Activated naive CD4-positive, alpha-beta T cell treated with anti-CD3 and anti-CD28 coated beads for 36 hours (primary cell): ENCODE measurements at regions of chr3 and their contacts with region 1.

Region 1: DNA sequence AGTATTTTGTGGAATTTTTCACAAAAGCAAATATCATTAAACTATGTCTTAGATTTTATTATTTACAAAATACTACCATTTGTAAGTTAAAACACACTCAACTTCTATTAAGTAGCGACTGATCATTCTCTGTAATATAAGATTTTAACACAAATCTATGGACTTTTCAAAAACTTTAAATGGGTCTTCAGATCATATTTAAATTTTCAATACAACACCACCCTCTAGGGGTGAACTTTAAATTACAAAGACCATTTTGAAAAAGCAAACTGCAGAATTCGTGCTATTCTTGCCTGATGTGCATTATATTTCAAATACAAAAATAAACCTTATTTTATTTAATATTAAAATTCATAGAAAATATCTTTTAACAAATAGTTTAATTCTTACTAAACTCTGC is 8.2 kb upstream of the VGLL4 start:
- DNase-seq: no peak
- H3K4me3 Mint-ChIP-seq: no peak overlapping the region
- H3K27ac Mint-ChIP-seq: no peak overlapping the region
- H3K4me1 Mint-ChIP-seq: peaks cover 6% of the 10 kb centered on the region
- H3K27me3 Mint-ChIP-seq: no peaks in the 10 kb centered on the region

Region 2: GRCh38 chr3:10945683-10946287 is 706.1 kb before region 1 on chr3:
- CTCF ChIA-PET with region 1: no interaction called
- intact Hi-C with region 1: loop called (anchors 10 kb)
- DNase-seq: peak; percentile 70
- H3K4me3 Mint-ChIP-seq: no peak overlapping the region
- H3K27ac Mint-ChIP-seq: no peak overlapping the region
- H3K4me1 Mint-ChIP-seq: no peaks in the 10 kb centered on the region
- H3K27me3 Mint-ChIP-seq: peaks cover 15% of the 10 kb centered on the region

Region 3: DNA sequence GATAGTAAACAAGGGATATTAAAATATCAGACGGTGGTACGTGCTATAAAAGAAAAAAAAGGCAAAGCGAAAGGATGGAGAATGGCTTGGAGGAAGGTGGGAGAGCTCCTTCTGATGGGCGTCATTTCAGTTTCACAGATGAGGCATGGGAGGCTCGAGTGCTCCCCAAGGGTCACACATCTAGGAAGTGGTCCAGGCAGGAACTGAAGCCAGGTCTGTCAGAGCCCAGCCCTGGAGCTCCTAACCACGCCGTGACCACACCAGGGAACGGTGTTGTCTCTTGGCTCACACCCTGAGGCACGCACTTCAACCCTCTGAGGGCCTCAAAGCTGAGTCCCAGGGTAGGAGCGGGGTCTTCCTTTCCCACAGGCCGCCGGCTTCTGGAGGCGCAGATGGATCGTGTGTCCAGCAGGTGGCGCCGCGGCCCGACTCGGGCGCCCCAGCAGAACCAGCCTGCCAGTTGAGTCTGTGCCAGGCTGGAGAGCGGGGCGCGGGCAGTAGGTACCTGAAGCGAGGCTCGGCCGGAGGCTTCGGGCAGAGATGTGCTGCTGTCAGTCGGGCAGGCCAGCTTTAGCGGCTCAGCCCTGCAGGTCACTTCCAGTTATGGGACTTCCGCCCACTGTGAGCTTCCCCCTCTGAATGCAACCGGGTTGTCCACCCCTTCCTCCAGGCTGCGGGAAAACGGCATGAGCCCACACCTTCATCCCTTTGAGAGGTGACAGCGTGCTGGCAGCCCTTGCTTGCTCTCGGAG is 591.2 kb before region 1 on chr3:
- CTCF ChIA-PET with region 1: interaction called, 4 read pairs
- intact Hi-C with region 1: loop called (anchors 2 kb)
- DNase-seq: peak; percentile 51
- H3K4me3 Mint-ChIP-seq: no peak overlapping the region
- H3K27ac Mint-ChIP-seq: no peak overlapping the region
- H3K4me1 Mint-ChIP-seq: no peaks in the 10 kb centered on the region
- H3K27me3 Mint-ChIP-seq: peaks cover 13% of the 10 kb centered on the region

Region 4: GRCh38 chr3:11071096-11071755 is 580.7 kb before region 1 on chr3:
- CTCF ChIA-PET with region 1: no interaction called
- intact Hi-C with region 1: no loop called
- DNase-seq: no peak
- H3K4me3 Mint-ChIP-seq: no peak overlapping the region
- H3K27ac Mint-ChIP-seq: no peak overlapping the region
- H3K4me1 Mint-ChIP-seq: no peaks in the 10 kb centered on the region
- H3K27me3 Mint-ChIP-seq: peaks cover 25% of the 10 kb centered on the region

Region 5: GRCh38 chr3:11155341-11156025 is 496.4 kb before region 1 on chr3:
- CTCF ChIA-PET with region 1: no interaction called
- intact Hi-C with region 1: loop called (anchors 10 kb)
- DNase-seq: peak; percentile 36
- H3K4me3 Mint-ChIP-seq: no peak overlapping the region
- H3K27ac Mint-ChIP-seq: no peak overlapping the region
- H3K4me1 Mint-ChIP-seq: peaks cover 8% of the 10 kb centered on the region
- H3K27me3 Mint-ChIP-seq: peaks cover 50% of the 10 kb centered on the region

Region 6: DNA sequence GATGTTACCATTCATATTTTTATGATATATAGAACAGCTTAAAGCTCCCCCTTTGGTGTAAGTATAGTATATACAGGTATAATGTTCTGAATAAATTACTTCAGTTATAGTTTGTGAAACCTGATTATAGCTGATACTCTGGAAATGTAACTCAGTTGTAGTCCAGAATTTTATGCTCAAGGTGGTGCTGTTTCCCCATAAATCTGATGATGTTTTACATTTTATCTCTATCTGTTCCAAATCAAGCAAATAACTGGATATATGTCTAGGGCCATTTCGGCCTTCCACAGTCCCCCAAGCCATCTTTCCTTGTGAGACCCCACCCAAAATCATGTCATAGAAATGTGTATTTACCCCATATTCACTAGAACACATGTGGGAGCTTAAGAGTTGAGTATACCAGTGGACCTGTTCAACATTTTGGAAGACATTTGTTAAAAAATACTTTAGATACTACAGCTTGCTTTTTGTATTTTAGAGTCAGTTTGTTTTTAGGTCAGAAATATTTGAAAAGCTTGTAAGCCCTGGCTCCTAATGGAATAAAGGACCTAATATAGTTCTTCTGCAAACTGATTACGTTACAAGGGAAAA is 272.6 kb before region 1 on chr3:
- CTCF ChIA-PET with region 1: interaction called, 21 read pairs
- intact Hi-C with region 1: loop called (anchors 1 kb)
- DNase-seq: no peak
- H3K4me3 Mint-ChIP-seq: no peak overlapping the region
- H3K27ac Mint-ChIP-seq: no peak overlapping the region
- H3K4me1 Mint-ChIP-seq: no peaks in the 10 kb centered on the region
- H3K27me3 Mint-ChIP-seq: no peaks in the 10 kb centered on the region

Region 7: GRCh38 chr3:11530153-11530721 is 121.7 kb before region 1 on chr3:
- CTCF ChIA-PET with region 1: no interaction called
- intact Hi-C with region 1: no loop called
- DNase-seq: no peak
- H3K4me3 Mint-ChIP-seq: no peak overlapping the region
- H3K27ac Mint-ChIP-seq: no peak overlapping the region
- H3K4me1 Mint-ChIP-seq: no peaks in the 10 kb centered on the region
- H3K27me3 Mint-ChIP-seq: no peaks in the 10 kb centered on the region

Region 8: DNA sequence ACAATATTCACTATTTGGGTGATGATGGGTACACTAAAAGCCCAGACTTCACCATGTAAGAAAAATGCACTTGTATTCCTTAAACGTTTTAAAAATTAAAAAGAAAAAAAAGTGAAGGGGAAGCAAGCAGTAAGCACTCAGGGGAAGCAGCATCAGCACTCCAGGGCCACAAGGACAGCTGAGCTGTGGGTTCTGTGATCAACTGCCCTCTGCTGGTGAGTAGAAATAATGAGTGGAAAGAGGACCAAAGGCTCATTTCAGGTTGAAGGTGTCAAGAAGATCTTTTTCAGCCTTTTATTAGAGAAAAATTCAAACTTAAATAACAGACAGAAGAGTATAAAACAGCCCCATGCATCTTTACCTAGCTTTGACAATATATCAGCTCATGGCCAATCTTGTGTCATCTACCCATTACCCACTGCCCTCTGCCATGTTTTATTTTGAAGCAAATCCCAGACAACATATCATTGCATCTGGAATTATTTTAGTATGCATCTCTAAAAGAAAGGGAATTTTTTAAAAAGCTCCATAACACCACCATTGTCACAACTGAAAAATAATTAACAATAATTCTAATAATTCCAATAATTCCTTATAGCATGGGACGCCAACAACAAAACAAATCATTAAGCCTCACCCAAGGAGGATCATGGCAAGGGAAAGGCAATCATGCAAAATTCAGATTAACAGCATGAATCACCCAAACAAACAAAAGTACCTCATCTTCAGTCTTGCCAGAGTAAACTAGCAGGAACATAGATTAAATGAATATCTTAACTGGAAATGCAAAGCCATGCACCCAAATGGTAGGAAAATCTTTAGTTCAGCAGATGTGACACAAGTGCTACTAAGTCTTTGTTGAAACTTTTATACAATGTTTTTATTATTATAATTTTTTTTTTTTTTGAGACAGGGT is 152.3 kb after region 1 on chr3:
- CTCF ChIA-PET with region 1: interaction called, 4 read pairs
- intact Hi-C with region 1: loop called (anchors 1 kb)
- DNase-seq: peak; percentile 56
- H3K4me3 Mint-ChIP-seq: no peak overlapping the region
- H3K27ac Mint-ChIP-seq: no peak overlapping the region
- H3K4me1 Mint-ChIP-seq: peaks cover 2% of the 10 kb centered on the region
- H3K27me3 Mint-ChIP-seq: no peaks in the 10 kb centered on the region